Activated naive CD8-positive, alpha-beta T cell treated with anti-CD3 and anti-CD28 coated beads, Interleukin-2, amount 10 ng/mL, durations not matched to agents 7 days and 5 days (primary cell): ENCODE measurements at regions of chr9 and their contacts with region 1.

Region 1: GRCh38 chr9:83980395-83981125 is at the start of gene RMI1:
- DNase-seq: peak; percentile 96
- ATAC-seq: peak; percentile 70
- H3K4me3 Mint-ChIP-seq: peak within 1 kb of the TSS; percentile 100
- H3K27ac Mint-ChIP-seq: peak within 1 kb of the TSS; percentile 92
- H3K4me1 Mint-ChIP-seq: peaks cover 38% of the 10 kb centered on the region
- H3K27me3 Mint-ChIP-seq: no peaks in the 10 kb centered on the region
- total RNA-seq, gene RMI1: 19.0 to 19.2 TPM

Region 2: GRCh38 chr9:83920927-83921707 is 59.4 kb before region 1 on chr9 and contains the start of gene KIF27:
- POLR2A ChIA-PET with region 1: interaction called, 22 read pairs
- DNase-seq: peak; percentile 99
- ATAC-seq: peak; percentile 88
- H3K4me3 Mint-ChIP-seq: peak within 1 kb of the TSS; percentile 85
- H3K27ac Mint-ChIP-seq: peak within 1 kb of the TSS; percentile 90
- H3K4me1 Mint-ChIP-seq: peaks cover 9% of the 10 kb centered on the region
- H3K27me3 Mint-ChIP-seq: no peaks in the 10 kb centered on the region
- total RNA-seq, gene KIF27: 3.4 to 3.6 TPM

Region 3: DNA sequence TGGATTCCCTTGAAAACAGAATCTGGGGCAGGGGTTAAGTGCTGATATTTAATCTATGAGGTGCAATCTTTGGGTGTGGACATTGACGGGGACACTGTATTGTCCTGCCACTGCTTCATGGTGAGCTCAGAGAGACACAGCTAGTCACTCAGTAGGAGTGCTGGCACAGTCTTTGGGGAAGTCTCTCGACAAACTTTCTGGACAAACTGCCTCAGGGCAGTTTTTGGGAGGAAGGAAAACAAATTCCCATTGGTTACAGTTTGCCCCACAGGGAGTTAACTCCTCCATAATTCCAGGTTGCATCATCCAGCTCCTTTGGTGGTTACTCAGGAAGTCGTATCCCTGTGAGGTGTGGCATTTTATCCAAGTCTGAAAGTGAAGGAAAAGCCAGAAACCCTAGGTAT is 18.4 kb before region 1 on chr9:
- POLR2A ChIA-PET with region 1: interaction called, 38 read pairs
- DNase-seq: no peak
- ATAC-seq: no peak
- H3K4me3 Mint-ChIP-seq: no peak overlapping the region
- H3K27ac Mint-ChIP-seq: no peak overlapping the region
- H3K4me1 Mint-ChIP-seq: peaks cover 3% of the 10 kb centered on the region
- H3K27me3 Mint-ChIP-seq: peaks cover 3% of the 10 kb centered on the region

Region 4: GRCh38 chr9:84007662-84008061 is 27.1 kb after region 1 on chr9:
- POLR2A ChIA-PET with region 1: interaction called, 15 read pairs
- DNase-seq: no peak
- ATAC-seq: no peak
- H3K4me3 Mint-ChIP-seq: no peak overlapping the region
- H3K27ac Mint-ChIP-seq: no peak overlapping the region
- H3K4me1 Mint-ChIP-seq: peaks cover 1% of the 10 kb centered on the region
- H3K27me3 Mint-ChIP-seq: no peaks in the 10 kb centered on the region